GM13977 (cell line): ENCODE measurements at regions of chrX and their contacts with region 1.

Region 1: GRCh38 chrX:135477576-135477975 is 42.9 kb upstream of the INTS6L start:
- DNase-seq: peak; percentile 9
- CTCF ChIP-seq: peak; percentile 56

Region 2: DNA sequence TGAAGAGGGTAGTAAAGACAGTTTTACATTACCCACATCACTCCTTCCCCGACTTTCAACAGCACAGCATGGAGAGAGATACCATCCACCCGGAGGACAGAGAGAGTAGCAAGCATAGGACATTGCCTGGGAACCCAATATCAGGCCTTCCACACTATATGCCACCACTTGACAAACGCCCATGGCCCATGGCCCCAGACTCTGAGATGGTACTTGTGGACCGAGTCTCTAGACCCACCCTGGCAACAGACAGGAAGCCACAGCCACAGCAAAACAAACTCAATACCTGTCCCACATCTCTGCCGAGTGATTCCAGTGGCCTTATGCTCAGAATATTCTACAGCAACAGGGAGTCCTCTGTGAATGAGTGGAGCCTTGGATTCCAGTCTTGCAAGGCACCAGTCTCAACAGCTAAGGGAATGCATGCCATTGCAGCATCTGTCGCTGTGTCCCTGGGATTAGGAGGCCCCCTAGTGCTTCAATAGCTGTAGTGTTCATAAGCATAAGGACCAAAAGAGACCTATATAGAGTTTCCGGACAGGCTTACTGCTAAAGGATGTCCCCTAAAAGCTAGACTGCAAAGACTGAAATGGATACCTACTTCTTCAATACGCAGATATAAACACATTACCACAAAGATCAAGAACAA is 291.7 kb before region 1 on chrX:
- in situ Hi-C with region 1: loop called (anchors 25 kb)
- DNase-seq: peak; percentile 63
- CTCF ChIP-seq: peak; percentile 65